ENCODE measurements at regions of chr12 and their contacts with region 1.

Region 1: GRCh38 chr12:62799126-62799736 is 135.7 kb downstream of the PPM1H start:
- DNase-seq: peak; percentile 85

Region 2: GRCh38 chr12:62603061-62603810 is 196.0 kb before region 1 on chr12:
- in situ Hi-C with region 1: loop called (anchors 25 kb)
- DNase-seq: peak; percentile 92

Region 3: GRCh38 chr12:63006536-63006935 is 207.3 kb after region 1 on chr12:
- in situ Hi-C with region 1: no loop called
- DNase-seq: no peak